ENCODE measurements at regions of chr6 and their contacts with region 1.

Region 1: GRCh38 chr6:44387346-44388133 is at the start of gene CDC5L:
- DNase-seq: peak; percentile 98
- ATAC-seq: peak; percentile 97
- H3K4me3 Mint-ChIP-seq: peak within 1 kb of the TSS; percentile 98
- H3K27ac Mint-ChIP-seq: peak within 1 kb of the TSS; percentile 99
- H3K4me1 Mint-ChIP-seq: peaks cover 30% of the 10 kb centered on the region
- H3K27me3 Mint-ChIP-seq: no peaks in the 10 kb centered on the region
- CTCF ChIP-seq: no peak
- total RNA-seq, gene CDC5L: 20.4 to 21.4 TPM

Region 2: GRCh38 chr6:44367681-44368080 is 19.9 kb before region 1 on chr6:
- CTCF ChIA-PET with region 1: no interaction called
- POLR2A ChIA-PET with region 1: no interaction called
- intact Hi-C with region 1: no loop called
- DNase-seq: no peak
- ATAC-seq: peak; percentile 34
- H3K4me3 Mint-ChIP-seq: no peak overlapping the region
- H3K27ac Mint-ChIP-seq: no peak overlapping the region
- H3K4me1 Mint-ChIP-seq: no peaks in the 10 kb centered on the region
- H3K27me3 Mint-ChIP-seq: peaks cover 11% of the 10 kb centered on the region
- CTCF ChIP-seq: no peak

Region 3: DNA sequence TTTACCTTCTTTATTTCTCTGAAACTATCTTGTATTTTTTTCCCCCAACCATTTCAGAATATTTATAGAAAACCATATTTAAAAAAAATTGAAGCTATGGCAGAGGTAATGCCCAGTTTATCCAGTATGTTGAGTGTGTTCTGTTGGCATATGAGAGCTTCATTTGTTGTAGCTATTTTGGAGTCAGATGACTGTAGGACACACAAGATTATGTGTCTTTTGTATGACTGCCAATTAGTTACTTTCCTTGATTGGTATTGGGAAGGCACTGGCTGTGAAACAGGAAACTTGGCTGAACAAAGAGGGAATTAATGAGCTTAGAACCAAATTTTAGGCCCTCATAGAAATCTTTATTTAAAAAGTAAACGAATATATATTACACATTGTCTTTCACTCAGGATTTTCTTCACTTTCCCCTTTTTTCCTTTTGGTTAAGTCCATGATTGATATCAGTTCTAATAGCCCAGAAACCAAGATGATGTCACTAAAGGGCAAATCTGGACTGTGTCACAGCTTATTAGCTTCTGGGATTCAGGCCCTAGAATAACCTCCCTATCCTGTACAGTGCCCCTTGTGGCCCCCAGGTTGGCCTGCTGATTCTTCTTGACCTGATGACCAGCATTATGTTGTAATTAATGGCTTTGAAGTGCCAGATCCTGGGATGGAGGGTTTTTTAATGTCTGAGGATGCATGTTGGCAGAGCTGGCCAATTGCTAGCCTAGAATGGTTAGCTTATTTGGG is 10.1 kb after region 1 on chr6:
- CTCF ChIA-PET with region 1: no interaction called
- POLR2A ChIA-PET with region 1: interaction called, 12 read pairs
- intact Hi-C with region 1: no loop called
- DNase-seq: no peak
- ATAC-seq: no peak
- H3K4me3 Mint-ChIP-seq: no peak overlapping the region
- H3K27ac Mint-ChIP-seq: no peak overlapping the region
- H3K4me1 Mint-ChIP-seq: peaks cover 22% of the 10 kb centered on the region
- H3K27me3 Mint-ChIP-seq: no peaks in the 10 kb centered on the region
- CTCF ChIP-seq: no peak